PC-3 (cell line): ENCODE measurements at regions of chr6 and their contacts with region 1.

Region 1: DNA sequence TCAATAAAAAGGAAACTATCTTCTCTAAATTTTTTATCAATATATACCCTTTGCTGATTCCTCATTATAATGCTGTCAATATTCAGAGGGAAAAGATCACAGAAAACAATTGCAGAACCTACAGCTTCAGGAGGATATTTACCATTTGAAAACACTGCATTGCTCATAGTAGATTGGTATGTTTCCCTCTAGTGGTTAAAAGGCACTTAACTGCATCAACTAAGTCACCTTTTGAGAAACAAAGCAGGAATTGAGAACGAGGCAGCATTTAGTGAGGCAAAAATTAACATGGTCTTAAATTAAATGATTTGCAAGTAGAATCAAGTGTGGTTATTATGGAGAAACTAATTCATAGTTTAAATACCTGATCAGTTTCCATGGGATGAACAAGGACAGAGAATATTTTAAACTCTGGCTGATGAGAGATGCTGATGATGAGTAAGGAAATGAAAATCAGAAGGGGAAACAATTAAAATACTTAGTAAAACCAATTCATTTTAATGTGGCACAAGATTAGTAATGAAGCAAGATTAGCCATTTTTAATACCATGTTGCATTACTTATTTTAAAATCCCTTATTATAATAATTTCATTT is 642.1 kb downstream of the EPHA7 start:
- DNase-seq: peak; percentile 52
- ATAC-seq: peak; percentile 67
- H3K4me3 ChIP-seq: no peak overlapping the region
- H3K27ac ChIP-seq: no peak overlapping the region
- H3K4me1 ChIP-seq: peaks cover 5% of the 10 kb centered on the region
- H3K27me3 ChIP-seq: no peaks in the 10 kb centered on the region
- CTCF ChIP-seq: peak; percentile 67

Region 2: DNA sequence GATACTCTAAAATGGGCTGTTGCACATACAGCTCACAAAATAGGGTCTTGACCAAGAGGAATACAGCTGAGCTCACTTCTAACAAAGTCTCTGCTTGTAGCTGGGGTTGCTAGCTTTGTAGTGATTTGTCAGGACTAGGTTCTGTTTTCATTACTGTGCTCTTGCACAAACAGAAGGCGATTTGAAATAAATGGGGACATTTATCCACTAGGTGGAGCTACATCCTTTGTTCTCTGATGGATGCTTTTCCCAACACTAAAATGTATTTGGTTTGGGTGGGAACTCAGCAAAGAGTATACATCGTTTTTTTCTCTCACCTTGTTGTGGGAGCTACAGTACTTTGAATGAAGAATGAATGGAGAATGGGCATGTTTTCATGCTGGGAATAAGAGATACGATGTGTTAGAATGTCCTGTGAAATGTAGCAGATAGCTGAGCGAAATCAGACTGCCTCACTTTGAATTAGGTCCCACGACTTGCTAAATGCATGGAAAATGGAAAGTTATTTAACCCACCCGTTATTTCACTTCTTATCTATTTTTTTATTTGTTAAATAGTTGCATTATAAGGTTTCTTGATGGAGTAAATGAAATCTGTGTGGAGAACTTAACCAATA is 1695.7 kb before region 1 on chr6:
- CTCF ChIA-PET with region 1: no interaction called
- POLR2A ChIA-PET with region 1: no interaction called
- intact Hi-C with region 1: loop called (anchors 5 kb)
- DNase-seq: peak; percentile 59
- ATAC-seq: peak; percentile 40
- H3K4me3 ChIP-seq: no peak overlapping the region
- H3K27ac ChIP-seq: no peak overlapping the region
- H3K4me1 ChIP-seq: no peaks in the 10 kb centered on the region
- H3K27me3 ChIP-seq: no peaks in the 10 kb centered on the region
- CTCF ChIP-seq: peak; percentile 75

Region 3: GRCh38 chr6:91781946-91782345 is 995.3 kb before region 1 on chr6:
- CTCF ChIA-PET with region 1: no interaction called
- POLR2A ChIA-PET with region 1: no interaction called
- intact Hi-C with region 1: no loop called
- DNase-seq: no peak
- ATAC-seq: no peak
- H3K4me3 ChIP-seq: no peak overlapping the region
- H3K27ac ChIP-seq: no peak overlapping the region
- H3K4me1 ChIP-seq: no peaks in the 10 kb centered on the region
- H3K27me3 ChIP-seq: no peaks in the 10 kb centered on the region
- CTCF ChIP-seq: no peak

Region 4: DNA sequence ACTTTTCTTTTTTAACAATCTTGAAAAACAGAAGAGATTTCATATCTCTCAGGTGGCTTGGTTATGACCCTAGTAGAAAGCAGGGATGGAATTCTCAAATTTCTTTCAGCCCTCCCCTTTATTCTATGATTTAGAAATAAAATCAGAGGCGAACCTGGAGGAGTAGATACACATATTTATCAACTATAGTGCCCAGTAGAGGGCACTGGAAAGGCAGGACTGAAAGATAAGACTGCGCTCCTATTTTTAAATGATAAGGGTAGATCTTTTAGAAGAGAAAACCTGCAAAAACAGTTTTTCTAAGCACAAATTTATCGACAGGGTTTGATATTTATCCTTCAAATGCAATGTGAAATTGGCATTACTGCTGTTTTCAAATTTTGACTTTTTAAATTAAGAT is 654.5 kb before region 1 on chr6:
- CTCF ChIA-PET with region 1: no interaction called
- POLR2A ChIA-PET with region 1: no interaction called
- intact Hi-C with region 1: loop called (anchors 5 kb)
- DNase-seq: peak; percentile 31
- ATAC-seq: no peak
- H3K4me3 ChIP-seq: no peak overlapping the region
- H3K27ac ChIP-seq: no peak overlapping the region
- H3K4me1 ChIP-seq: peaks cover 16% of the 10 kb centered on the region
- H3K27me3 ChIP-seq: no peaks in the 10 kb centered on the region
- CTCF ChIP-seq: peak; percentile 62

Region 5: GRCh38 chr6:92589976-92590375 is 187.3 kb before region 1 on chr6:
- CTCF ChIA-PET with region 1: no interaction called
- POLR2A ChIA-PET with region 1: no interaction called
- intact Hi-C with region 1: loop called (anchors 10 kb)
- DNase-seq: peak; percentile 9
- ATAC-seq: no peak
- H3K4me3 ChIP-seq: no peak overlapping the region
- H3K27ac ChIP-seq: no peak overlapping the region
- H3K4me1 ChIP-seq: peaks cover 14% of the 10 kb centered on the region; the same call in 1 of the 2 replicates
- H3K27me3 ChIP-seq: no peaks in the 10 kb centered on the region
- CTCF ChIP-seq: no peak

Region 6: GRCh38 chr6:92647625-92648024 is 129.6 kb before region 1 on chr6:
- CTCF ChIA-PET with region 1: no interaction called
- POLR2A ChIA-PET with region 1: no interaction called
- intact Hi-C with region 1: loop called (anchors 5 kb)
- DNase-seq: peak; percentile 18
- ATAC-seq: no peak
- H3K4me3 ChIP-seq: no peak overlapping the region
- H3K27ac ChIP-seq: no peak overlapping the region
- H3K4me1 ChIP-seq: no peaks in the 10 kb centered on the region
- H3K27me3 ChIP-seq: no peaks in the 10 kb centered on the region
- CTCF ChIP-seq: no peak

Region 7: GRCh38 chr6:92684386-92684785 is 92.9 kb before region 1 on chr6:
- CTCF ChIA-PET with region 1: no interaction called
- POLR2A ChIA-PET with region 1: no interaction called
- intact Hi-C with region 1: loop called (anchors 5 kb)
- DNase-seq: peak; percentile 66
- ATAC-seq: peak; percentile 67
- H3K4me3 ChIP-seq: no peak overlapping the region
- H3K27ac ChIP-seq: peak overlapping the region; percentile 31; the same call in 1 of the 2 replicates
- H3K4me1 ChIP-seq: peaks cover 26% of the 10 kb centered on the region
- H3K27me3 ChIP-seq: no peaks in the 10 kb centered on the region
- CTCF ChIP-seq: no peak